Adrenal gland (tissue), 19 donors: ENCODE measurements at regions of chr19 and their contacts with region 1.

Region 1: DNA sequence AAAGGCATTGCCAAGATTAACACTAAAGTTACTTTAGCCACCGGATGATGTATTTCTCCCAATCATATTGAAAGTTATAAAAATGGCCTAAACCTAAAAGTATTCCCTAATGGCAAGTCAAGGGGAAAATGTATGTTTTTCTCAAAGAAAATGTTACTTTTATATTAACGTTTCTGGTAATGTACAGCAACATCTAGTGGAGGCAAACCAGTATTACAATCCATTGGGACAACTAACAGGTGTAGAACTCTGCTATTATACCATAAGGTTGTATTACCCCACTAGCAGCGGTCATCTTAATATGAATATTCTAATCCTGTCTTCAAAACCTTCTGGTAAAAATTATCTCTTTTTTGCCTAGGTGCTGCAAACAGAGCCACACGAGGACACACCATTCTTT is 69.2 kb downstream of the ZNF100 start:
- DNase-seq: peak in 1 of 7 donors; percentile 7
- H3K4me3 ChIP-seq: no peak overlapping the region
- H3K27ac ChIP-seq: no peak overlapping the region
- H3K4me1 ChIP-seq: no peaks in the 10 kb centered on the region
- H3K27me3 ChIP-seq: no peaks in the 10 kb centered on the region
- CTCF ChIP-seq: peak; percentile 48 to 76 (median 66)
- POLR2A ChIP-seq: no peak

Region 2: GRCh38 chr19:21020298-21021227 is 677.7 kb before region 1 on chr19 and contains the start of gene ZNF430:
- intact Hi-C with region 1: no loop called
- DNase-seq: peak; percentile 94 to 99 (median 97)
- H3K4me3 ChIP-seq: peak within 1 kb of the TSS in 3 of 4 donors; percentile 10 to 70 (median 59)
- H3K27ac ChIP-seq: peak within 1 kb of the TSS; percentile 40 to 92 (median 69)
- H3K4me1 ChIP-seq: peaks cover 19 to 30% of the 10 kb centered on the region in 2 donors
- H3K27me3 ChIP-seq: no peaks in the 10 kb centered on the region
- CTCF ChIP-seq: no peak
- POLR2A ChIP-seq: peak; percentile 52 to 84
- total RNA-seq, gene ZNF430: 4.4 to 59.1 (median 14.6) TPM

Region 3: GRCh38 chr19:21202865-21203494 is 495.2 kb before region 1 on chr19:
- intact Hi-C with region 1: loop called in 1 of 2 experiments (anchors 5 kb)
- DNase-seq: peak in 1 of 7 donors; percentile 16
- H3K4me3 ChIP-seq: no peak overlapping the region
- H3K27ac ChIP-seq: no peak overlapping the region
- H3K4me1 ChIP-seq: peaks cover 7 to 11% of the 10 kb centered on the region in 2 donors
- H3K27me3 ChIP-seq: no peaks in the 10 kb centered on the region
- CTCF ChIP-seq: peak; percentile 48 to 73 (median 58)
- POLR2A ChIP-seq: no peak

Region 4: DNA sequence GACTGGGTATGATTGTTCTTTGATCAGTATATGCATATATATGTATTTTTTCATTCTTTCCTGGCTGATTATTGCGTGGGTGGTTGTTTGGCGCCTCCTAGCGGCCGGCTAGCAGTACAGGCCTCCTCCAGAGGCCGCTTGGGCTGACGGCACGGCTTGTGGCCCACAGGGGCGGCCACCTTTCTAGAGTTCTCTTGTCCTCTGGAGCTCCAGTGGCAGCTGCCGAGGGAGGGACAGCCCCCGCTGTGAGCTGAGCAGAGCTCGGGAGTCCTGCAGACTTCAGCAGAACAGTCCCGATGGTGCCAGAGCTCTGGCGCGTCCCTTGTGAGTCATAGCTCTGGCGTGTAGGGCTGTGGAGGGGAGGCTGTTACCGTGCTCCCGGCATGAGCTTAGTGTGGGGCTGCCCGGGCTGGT is 215.3 kb before region 1 on chr19:
- intact Hi-C with region 1: loop called (anchors 5 to 10 kb)
- DNase-seq: peak; percentile 36 to 80 (median 69)
- H3K4me3 ChIP-seq: no peak overlapping the region
- H3K27ac ChIP-seq: peak overlapping the region in 3 of 5 donors; percentile 6 to 27 (median 13)
- H3K4me1 ChIP-seq: no peaks in the 10 kb centered on the region
- H3K27me3 ChIP-seq: no peaks in the 10 kb centered on the region
- CTCF ChIP-seq: peak; percentile 66 to 87 (median 78)
- POLR2A ChIP-seq: peak in 1 of 2 donors; percentile 19